Psoas muscle (tissue), 8 donors: ENCODE measurements at regions of chr16 and their contacts with region 1.

Region 1: DNA sequence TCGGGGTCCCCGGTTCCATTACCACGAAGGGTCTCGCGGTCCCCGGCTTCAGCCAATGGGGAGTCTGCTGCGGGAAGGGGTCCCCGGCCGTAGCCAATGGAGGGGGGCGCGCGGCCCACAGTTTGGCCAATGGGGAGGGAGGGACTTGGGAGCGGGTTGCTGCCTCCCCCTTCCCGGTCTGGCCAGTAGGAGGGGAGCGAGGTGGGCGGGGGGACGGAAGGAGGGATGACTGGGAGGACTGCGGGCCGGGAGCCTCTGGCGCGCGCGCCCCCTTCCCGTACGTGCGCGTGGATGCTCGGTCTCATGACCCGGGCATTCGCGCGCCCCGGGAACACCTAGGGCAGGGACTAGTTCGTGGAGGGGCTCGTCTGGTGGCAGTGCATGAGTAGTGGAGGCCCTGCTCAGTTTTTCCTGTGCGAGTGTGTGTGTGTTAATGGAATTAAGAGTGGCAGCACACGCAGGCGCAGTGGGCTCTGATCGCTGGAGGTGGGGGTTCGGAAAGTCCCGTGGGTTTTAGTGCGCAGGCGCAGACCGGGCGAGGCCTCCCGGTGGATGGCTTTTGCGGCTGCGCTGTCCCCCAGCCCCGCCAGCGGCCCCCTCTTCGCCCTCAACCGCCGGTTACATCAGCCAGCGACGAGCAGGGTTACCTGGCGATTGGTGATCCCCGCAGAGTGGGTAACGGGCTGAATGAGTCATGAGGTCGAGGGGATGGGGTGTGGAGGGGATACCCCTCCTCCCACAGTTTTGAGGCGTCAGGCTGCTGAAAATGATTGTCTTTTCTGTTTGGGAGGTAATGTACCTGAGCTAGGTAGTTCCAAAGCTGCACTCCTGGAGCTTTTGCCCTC is 1.3 kb downstream of the ATXN2L start:
- DNase-seq: peak; percentile 98 to 99
- ATAC-seq: peak; percentile 91 to 92 (median 91)
- H3K4me3 ChIP-seq: peak overlapping the region; percentile 84
- H3K27ac ChIP-seq: peak overlapping the region; percentile 93
- H3K4me1 ChIP-seq: peaks cover 19% of the 10 kb centered on the region
- H3K27me3 ChIP-seq: no peaks in the 10 kb centered on the region
- CTCF ChIP-seq: no peak

Region 2: DNA sequence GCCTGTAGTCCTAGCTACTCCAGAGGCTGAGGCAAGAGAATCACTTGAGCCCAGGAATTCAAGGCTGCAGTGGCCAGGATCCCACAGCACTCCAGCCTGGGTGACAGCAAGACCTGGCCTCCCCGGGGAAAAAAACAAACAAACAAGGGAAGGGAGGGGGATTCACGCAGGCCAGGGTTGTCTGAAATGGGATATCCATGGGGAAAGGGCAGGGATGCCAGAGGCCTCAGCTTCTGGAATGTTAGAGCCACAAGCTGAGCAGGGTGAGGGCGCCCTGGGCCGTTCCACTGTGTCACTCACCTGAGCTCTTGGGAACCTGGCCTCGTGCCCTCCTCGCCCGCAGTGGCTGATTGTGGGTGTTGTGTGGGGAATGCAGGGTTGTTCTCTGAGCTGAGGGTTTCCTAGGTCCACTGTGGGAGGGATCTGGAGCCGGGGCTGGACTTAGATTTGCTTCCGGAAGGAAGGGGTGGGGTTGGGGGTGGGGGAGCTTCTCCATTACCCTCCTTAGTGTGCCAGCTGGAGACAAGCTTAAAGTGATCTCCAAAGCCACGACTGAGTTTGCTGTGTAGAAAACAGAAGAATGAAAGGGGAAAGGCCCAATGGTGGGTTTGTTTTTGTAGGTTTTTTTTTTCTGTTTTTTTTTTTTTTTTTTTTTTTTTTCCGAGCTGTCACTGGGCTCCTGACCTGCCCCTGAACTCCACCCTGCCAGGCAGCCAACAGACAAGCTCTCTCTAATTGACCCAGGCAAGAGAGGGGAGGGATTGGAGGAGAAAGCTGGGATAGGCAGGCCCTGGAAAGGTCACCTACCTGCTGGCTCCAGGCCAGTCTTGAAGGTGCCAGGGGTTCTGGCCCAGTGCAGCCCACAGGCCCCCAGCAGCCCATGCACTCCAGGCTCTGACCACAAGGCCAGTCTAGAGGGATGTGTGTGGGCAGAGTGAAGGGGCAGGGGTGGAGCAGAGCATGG is 214.2 kb before region 1 on chr16 and contains the start of gene SULT1A1:
- intact Hi-C with region 1: no loop called
- DNase-seq: peak; percentile 41 to 79
- ATAC-seq: peak; percentile 55 to 78 (median 60)
- H3K4me3 ChIP-seq: peak within 1 kb of the TSS; percentile 52
- H3K27ac ChIP-seq: no peak within 1 kb of the TSS
- H3K4me1 ChIP-seq: peaks cover 10% of the 10 kb centered on the region
- H3K27me3 ChIP-seq: no peaks in the 10 kb centered on the region
- CTCF ChIP-seq: no peak
- total RNA-seq, gene SULT1A1: 8.1 to 22.8 (median 13.4) TPM

Region 3: GRCh38 chr16:28863929-28864793 is 40.1 kb after region 1 on chr16:
- intact Hi-C with region 1: loop called in 1 of 2 experiments (anchors 5 kb)
- DNase-seq: peak in 1 of 2 donors; percentile 33
- ATAC-seq: peak; percentile 18 to 43 (median 22)
- H3K4me3 ChIP-seq: peak overlapping the region; percentile 95
- H3K27ac ChIP-seq: peak overlapping the region; percentile 98
- H3K4me1 ChIP-seq: peaks cover 10% of the 10 kb centered on the region
- H3K27me3 ChIP-seq: no peaks in the 10 kb centered on the region
- CTCF ChIP-seq: no peak